ENCODE measurements at regions of chr6 and their contacts with region 1.

Region 1: DNA sequence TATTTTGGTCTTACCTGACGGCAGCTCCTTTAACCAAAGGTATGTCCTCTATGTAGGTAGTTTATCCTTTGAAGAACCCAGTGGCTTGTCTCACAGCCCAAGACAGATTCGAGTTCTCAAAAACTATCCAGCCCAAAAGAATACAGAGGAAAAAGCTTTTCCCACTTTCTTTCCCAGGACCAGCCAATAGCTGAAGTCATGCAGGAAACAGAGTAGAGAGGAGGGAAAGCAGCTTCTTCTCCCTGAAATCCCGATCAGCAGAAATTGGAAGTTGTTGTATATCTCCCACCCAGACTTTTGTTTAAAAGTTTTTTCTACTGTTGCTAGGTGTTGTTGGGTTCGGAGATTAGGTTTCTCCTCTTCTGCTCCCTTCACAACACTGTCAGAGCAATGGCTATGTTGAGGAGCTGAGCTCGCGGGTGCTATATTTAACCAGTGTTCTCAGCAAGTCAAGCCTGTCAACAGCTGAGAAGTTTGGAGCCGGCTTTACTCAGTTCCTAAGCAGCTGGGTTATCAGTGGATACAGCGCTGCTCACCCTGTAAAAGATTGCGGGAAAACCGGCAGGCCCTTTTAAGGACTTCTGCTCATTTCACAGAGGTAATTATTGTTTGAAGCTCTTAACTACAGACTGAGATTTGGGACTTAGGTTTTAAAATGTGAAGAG is at the start of gene FILIP1:
- DNase-seq: peak in 1 of 2 donors; percentile 70
- ATAC-seq: peak; percentile 91
- H3K4me3 ChIP-seq: peak within 1 kb of the TSS; percentile 97 to 98
- H3K27ac ChIP-seq: peak within 1 kb of the TSS; percentile 89 to 90
- H3K4me1 ChIP-seq: peaks cover 0 to 2% of the 10 kb centered on the region in 2 donors
- H3K27me3 ChIP-seq: no peaks in the 10 kb centered on the region
- total RNA-seq, gene FILIP1: 34.4 to 53.3 TPM

Region 2: DNA sequence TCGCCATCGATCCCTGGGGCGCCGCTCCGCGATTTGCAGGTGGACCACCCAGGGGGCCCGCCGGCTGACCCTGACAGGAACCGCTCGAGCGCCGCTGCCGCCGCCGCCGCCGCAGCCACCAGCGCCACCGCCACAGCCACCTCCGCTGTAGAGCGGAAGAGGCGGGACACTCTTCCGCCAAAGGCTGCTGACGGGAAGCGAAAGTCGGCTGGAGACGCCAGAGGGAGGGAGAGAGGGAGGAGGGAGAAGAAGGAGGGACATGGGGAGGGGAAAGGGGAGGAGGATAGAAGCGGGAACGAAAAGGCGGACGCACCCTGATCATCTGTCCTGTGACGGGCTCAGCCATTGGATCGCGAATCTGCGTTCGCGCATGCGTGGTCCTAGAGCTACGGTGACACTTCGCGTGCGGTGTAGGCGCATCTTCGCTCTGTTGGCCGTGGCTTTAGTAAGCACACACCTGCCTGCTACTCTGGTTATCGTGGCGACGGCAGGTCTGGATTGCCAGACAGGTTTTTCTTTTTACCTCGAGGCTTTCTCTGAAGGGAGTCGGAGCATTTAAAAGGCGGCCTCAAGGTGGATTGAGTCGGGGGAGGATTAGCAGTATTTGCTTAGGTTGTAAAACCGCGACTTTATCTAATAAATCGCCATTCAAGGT is 208.8 kb before region 1 on chr6 and contains the start of gene TMEM30A:
- intact Hi-C with region 1: loop called in 1 of 2 experiments (anchors 5 kb)
- DNase-seq: peak; percentile 98
- ATAC-seq: peak; percentile 100
- H3K4me3 ChIP-seq: peak within 1 kb of the TSS; percentile 83 to 94
- H3K27ac ChIP-seq: peak within 1 kb of the TSS in 1 of 2 donors; percentile 87
- H3K4me1 ChIP-seq: peaks cover 0 to 2% of the 10 kb centered on the region in 2 donors
- H3K27me3 ChIP-seq: no peaks in the 10 kb centered on the region
- total RNA-seq, gene TMEM30A: 133 to 164 TPM

Region 3: GRCh38 chr6:75296811-75297779 is 196.4 kb before region 1 on chr6:
- intact Hi-C with region 1: loop called in 1 of 2 experiments (anchors 5 kb)
- DNase-seq: no peak
- ATAC-seq: peak; percentile 57
- H3K4me3 ChIP-seq: no peak overlapping the region
- H3K27ac ChIP-seq: no peak overlapping the region
- H3K4me1 ChIP-seq: no peaks in the 10 kb centered on the region
- H3K27me3 ChIP-seq: no peaks in the 10 kb centered on the region

Region 4: GRCh38 chr6:75368151-75368779 is 125.3 kb before region 1 on chr6:
- intact Hi-C with region 1: loop called (anchors 5 to 10 kb)
- DNase-seq: no peak
- ATAC-seq: no peak
- H3K4me3 ChIP-seq: no peak overlapping the region
- H3K27ac ChIP-seq: peak overlapping the region in 1 of 2 donors; percentile 14
- H3K4me1 ChIP-seq: peaks cover 0 to 1% of the 10 kb centered on the region in 2 donors
- H3K27me3 ChIP-seq: no peaks in the 10 kb centered on the region

Region 5: DNA sequence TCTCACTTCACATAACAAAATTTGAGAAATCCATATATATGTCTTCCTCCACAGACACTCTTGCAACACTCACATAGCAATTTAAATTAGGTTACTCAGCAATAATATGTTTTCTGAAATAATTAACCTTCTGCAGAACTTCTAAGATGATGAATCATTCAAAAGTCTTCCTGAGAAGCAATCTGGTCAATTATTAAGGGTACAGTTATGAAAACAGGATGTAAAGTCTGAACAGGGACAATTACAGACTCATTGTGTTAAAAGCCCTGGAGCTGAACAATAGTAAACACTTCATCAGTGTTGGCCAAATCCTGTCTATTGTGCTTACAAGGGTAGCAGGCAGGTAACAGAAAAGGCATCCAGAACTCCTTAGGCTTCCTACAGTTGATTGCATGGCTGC is 75.3 kb before region 1 on chr6:
- intact Hi-C with region 1: loop called in 1 of 2 experiments (anchors 5 kb)
- DNase-seq: no peak
- ATAC-seq: no peak
- H3K4me3 ChIP-seq: no peak overlapping the region
- H3K27ac ChIP-seq: peak overlapping the region in 1 of 2 donors; percentile 43
- H3K4me1 ChIP-seq: peaks cover 7 to 9% of the 10 kb centered on the region in 2 donors
- H3K27me3 ChIP-seq: no peaks in the 10 kb centered on the region

Region 6: DNA sequence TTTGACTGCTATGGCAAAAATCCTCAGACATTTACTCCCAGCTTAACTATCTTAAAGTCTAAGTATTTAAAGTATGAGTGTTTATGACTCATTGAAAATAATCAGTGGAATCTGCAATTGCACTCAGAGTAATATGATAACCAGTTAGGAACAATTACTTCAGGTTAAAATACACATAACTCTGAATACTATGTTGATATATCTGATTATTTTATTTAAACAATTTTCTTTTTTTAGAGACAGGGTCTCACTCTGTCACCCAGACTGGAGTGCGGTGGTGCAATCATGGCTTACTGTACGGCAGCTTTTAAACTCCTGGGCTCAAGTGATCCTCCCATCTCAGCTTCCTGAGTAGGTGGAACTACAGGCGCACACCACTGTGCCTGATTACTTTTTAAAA is 43.8 kb before region 1 on chr6:
- intact Hi-C with region 1: loop called in 1 of 2 experiments (anchors 5 kb)
- DNase-seq: no peak
- ATAC-seq: no peak
- H3K4me3 ChIP-seq: no peak overlapping the region
- H3K27ac ChIP-seq: no peak overlapping the region
- H3K4me1 ChIP-seq: peaks cover 8 to 12% of the 10 kb centered on the region in 2 donors
- H3K27me3 ChIP-seq: no peaks in the 10 kb centered on the region

Region 7: DNA sequence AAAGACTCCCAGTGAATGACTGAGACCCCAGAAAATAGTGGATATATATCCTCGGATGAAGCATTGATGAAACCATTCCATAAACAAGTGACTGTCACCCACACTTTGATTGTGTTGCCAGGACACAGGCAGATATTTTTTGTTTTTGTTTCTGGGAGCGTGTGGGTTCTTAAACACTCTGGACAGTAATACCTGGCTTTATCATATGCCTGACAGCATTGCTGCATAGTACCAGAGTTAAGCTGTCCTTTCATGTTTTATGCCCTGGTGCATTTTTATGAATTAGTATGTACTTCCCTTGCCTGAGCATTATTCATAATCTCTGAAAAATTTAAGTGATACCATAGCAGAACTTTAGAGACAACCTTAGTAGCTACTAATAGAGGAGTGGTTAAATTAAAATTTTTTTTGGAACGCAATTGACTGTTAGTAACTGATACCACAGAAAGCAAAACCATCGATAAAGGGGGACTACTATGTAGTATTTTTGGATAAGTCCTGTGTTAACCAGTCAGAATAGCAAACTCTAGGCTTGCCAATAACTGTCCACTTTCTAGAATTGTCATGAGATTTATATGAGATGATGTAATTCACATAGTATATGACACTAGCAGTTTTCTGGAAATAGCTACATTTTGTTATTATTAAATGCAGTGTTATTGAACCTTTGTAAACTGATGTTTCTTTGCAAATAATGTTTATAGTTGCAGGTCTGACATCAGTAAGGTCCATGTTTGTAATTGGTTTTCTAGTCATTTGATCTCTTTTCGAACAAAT is 138.5 kb after region 1 on chr6:
- intact Hi-C with region 1: no loop called
- DNase-seq: no peak
- ATAC-seq: no peak
- H3K4me3 ChIP-seq: no peak overlapping the region
- H3K27ac ChIP-seq: no peak overlapping the region
- H3K4me1 ChIP-seq: no peaks in the 10 kb centered on the region
- H3K27me3 ChIP-seq: no peaks in the 10 kb centered on the region

Region 8: GRCh38 chr6:75766387-75766786 is 272.9 kb after region 1 on chr6:
- intact Hi-C with region 1: no loop called
- DNase-seq: no peak
- ATAC-seq: no peak
- H3K4me3 ChIP-seq: no peak overlapping the region
- H3K27ac ChIP-seq: no peak overlapping the region
- H3K4me1 ChIP-seq: no peaks in the 10 kb centered on the region
- H3K27me3 ChIP-seq: no peaks in the 10 kb centered on the region